Breast epithelium (tissue), 4 donors: ENCODE measurements at regions of chr3 and their contacts with region 1.

Region 1: DNA sequence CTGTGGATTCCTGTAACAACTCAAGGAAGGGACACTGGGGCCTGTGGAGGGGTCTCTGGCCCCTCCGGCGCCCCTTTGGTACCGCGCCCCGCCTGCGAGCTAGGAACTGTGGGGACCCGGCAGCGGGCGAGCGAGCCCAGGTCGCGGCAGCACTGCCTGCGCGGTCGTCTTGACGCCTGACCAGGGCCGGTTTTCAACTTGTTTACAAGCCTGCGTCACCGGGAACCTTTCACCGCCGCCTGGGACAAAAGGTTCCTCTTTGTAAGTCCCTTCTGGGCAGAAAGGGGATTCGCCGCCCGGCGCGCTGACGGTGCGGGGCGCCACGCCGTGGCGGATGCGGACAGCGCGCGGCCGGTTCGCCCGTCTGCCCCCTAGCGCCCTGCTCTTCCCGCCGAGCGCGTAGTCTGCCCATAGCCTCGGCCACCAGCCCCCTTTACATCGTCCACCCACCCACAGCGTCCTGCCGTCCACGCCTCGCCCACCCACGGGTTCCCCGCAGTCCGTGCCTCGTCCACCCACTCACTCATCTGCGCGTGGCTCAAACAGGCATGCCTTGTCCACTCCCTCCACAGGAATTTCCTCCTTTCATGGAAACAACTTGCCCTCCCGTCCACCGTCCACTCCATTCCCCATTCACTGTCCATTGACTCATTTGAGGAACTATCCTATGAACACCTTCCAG is 5.5 kb upstream of the CFAP100 start:
- DNase-seq: peak; percentile 87 to 92
- H3K4me3 ChIP-seq: peak overlapping the region; percentile 32 to 66 (median 49)
- H3K27ac ChIP-seq: peak overlapping the region; percentile 88 to 93
- H3K4me1 ChIP-seq: no peaks in the 10 kb centered on the region
- H3K27me3 ChIP-seq: no peaks in the 10 kb centered on the region
- CTCF ChIP-seq: peak; percentile 87 to 98 (median 93)
- POLR2A ChIP-seq: peak; percentile 55

Region 2: DNA sequence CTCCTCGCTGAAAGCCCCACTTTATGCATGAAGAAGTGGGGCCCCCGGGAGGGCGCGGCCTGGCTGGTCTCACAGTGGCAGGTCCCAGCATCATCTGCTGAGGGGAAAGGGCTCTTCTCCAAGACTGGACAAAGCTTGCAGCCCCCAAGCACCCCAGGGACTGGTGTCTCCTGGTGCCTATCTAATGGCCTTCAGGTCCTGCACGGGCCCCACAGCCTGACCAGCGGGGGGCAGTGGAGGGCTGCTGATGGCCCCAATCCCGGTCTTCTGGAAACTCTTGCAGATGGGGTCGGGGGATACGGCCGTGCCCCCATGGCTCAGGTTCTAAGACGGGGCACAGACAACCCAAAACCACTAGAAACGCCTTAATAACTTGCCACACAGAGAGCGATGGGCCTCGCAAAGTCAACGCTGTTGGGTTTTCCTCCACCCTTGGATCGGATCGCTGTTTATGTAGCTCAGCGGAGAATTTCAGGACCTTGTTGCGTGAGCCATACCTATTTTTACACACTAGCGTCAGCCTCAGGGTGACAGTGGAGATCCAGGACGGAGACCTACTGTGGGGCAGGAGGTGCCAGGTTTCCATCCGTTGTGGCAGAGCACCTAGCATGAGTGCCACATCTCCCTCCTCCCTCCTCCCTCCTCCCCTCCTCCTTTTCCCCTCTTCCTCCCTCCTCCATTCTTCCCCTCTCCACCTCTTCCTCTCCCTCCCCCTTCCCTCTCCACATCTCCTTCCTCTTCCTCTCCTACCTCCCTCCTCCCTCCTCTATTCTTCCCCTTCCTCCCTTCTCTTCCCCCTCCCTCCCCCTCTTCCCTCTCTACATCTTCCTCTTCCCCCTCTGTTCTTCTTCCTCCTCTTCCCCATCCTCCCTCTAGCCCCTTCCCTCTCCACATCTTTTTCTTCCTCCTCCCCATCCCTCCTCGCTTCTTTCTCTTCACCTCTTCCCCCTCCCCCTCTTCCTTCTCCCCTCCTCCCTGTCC is 129.6 kb before region 1 on chr3:
- intact Hi-C with region 1: loop called (anchors 5 kb)
- DNase-seq: no peak
- H3K4me3 ChIP-seq: no peak overlapping the region
- H3K27ac ChIP-seq: no peak overlapping the region
- H3K4me1 ChIP-seq: no peaks in the 10 kb centered on the region
- H3K27me3 ChIP-seq: no peaks in the 10 kb centered on the region
- CTCF ChIP-seq: peak in 2 of 3 donors; percentile 46 to 56
- POLR2A ChIP-seq: no peak